T-cell (primary cell): ENCODE measurements at regions of chr2 and their contacts with region 1.

Region 1: GRCh38 chr2:217886720-217887309 is 116.0 kb downstream of the TNS1 start:
- DNase-seq: peak in 34 of 35 experiments; percentile 8 to 71 (median 44)
- ATAC-seq: peak in 3 of 4 experiments; percentile 38 to 67 (median 58)
- H3K4me3 ChIP-seq: no peak overlapping the region
- H3K4me3 Mint-ChIP-seq: no peak overlapping the region
- H3K27ac ChIP-seq: no peak overlapping the region
- H3K27ac Mint-ChIP-seq: no peak overlapping the region
- H3K4me1 ChIP-seq: peaks cover 0 to 3% of the 10 kb centered on the region in 2 experiments
- H3K4me1 Mint-ChIP-seq: peaks cover 0 to 3% (median 2%) of the 10 kb centered on the region in 3 donors
- H3K27me3 ChIP-seq: peaks cover 0 to 19% of the 10 kb centered on the region in 2 experiments
- H3K27me3 Mint-ChIP-seq: peaks cover 5 to 12% of the 10 kb centered on the region in 2 donors

Region 2: GRCh38 chr2:217742841-217743240 is 144.0 kb before region 1 on chr2:
- CTCF ChIA-PET with region 1: no interaction called
- POLR2A ChIA-PET with region 1: no interaction called
- DNase-seq: no peak
- ATAC-seq: no peak
- H3K4me3 ChIP-seq: no peak overlapping the region
- H3K4me3 Mint-ChIP-seq: no peak overlapping the region
- H3K27ac ChIP-seq: no peak overlapping the region
- H3K27ac Mint-ChIP-seq: no peak overlapping the region
- H3K4me1 ChIP-seq: no peaks in the 10 kb centered on the region
- H3K4me1 Mint-ChIP-seq: no peaks in the 10 kb centered on the region
- H3K27me3 ChIP-seq: peaks cover 0 to 4% of the 10 kb centered on the region in 2 experiments
- H3K27me3 Mint-ChIP-seq: no peaks in the 10 kb centered on the region

Region 3: GRCh38 chr2:218036361-218036760 is 149.5 kb after region 1 on chr2:
- CTCF ChIA-PET with region 1: no interaction called
- POLR2A ChIA-PET with region 1: no interaction called
- DNase-seq: no peak
- ATAC-seq: no peak
- H3K4me3 ChIP-seq: no peak overlapping the region
- H3K4me3 Mint-ChIP-seq: no peak overlapping the region
- H3K27ac ChIP-seq: no peak overlapping the region
- H3K27ac Mint-ChIP-seq: no peak overlapping the region
- H3K4me1 ChIP-seq: peaks cover 0 to 20% of the 10 kb centered on the region in 2 experiments
- H3K4me1 Mint-ChIP-seq: peaks cover 12 to 20% (median 16%) of the 10 kb centered on the region in 3 donors
- H3K27me3 ChIP-seq: peaks cover 0 to 11% of the 10 kb centered on the region in 2 experiments
- H3K27me3 Mint-ChIP-seq: peaks cover 18 to 26% of the 10 kb centered on the region in 2 donors

Region 4: DNA sequence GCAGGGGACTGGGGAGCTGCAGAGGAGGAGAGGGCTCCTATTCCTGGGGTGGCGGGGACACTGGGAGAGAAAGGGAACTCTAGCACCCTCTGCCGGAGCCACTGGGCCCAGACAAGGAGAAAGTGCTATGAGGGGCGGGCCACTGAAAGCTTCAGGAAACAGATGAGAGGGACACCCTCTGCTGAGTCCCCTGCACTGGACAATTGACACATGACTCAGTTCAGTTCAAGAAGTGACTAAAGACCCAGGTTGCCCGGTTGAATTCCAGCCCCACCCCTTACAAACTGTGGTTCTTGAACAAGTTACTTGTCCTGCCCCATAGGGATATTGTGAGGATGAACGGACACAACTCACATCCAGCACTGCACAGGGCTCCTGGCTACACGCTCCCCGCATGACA is 187.2 kb after region 1 on chr2:
- CTCF ChIA-PET with region 1: no interaction called
- POLR2A ChIA-PET with region 1: interaction called in 1 of 2 experiments, 10 read pairs
- DNase-seq: peak in 10 of 35 experiments; percentile 4 to 25 (median 14)
- ATAC-seq: no peak
- H3K4me3 ChIP-seq: no peak overlapping the region
- H3K4me3 Mint-ChIP-seq: no peak overlapping the region
- H3K27ac ChIP-seq: no peak overlapping the region
- H3K27ac Mint-ChIP-seq: no peak overlapping the region
- H3K4me1 ChIP-seq: peaks cover 0 to 5% of the 10 kb centered on the region in 2 experiments
- H3K4me1 Mint-ChIP-seq: peaks cover 3 to 4% (median 4%) of the 10 kb centered on the region in 3 donors
- H3K27me3 ChIP-seq: peaks cover 0 to 19% of the 10 kb centered on the region in 2 experiments
- H3K27me3 Mint-ChIP-seq: peaks cover 1 to 3% of the 10 kb centered on the region in 2 donors